Esophagus muscularis mucosa (tissue), 4 donors: ENCODE measurements at regions of chr10 and their contacts with region 1.

Region 1: DNA sequence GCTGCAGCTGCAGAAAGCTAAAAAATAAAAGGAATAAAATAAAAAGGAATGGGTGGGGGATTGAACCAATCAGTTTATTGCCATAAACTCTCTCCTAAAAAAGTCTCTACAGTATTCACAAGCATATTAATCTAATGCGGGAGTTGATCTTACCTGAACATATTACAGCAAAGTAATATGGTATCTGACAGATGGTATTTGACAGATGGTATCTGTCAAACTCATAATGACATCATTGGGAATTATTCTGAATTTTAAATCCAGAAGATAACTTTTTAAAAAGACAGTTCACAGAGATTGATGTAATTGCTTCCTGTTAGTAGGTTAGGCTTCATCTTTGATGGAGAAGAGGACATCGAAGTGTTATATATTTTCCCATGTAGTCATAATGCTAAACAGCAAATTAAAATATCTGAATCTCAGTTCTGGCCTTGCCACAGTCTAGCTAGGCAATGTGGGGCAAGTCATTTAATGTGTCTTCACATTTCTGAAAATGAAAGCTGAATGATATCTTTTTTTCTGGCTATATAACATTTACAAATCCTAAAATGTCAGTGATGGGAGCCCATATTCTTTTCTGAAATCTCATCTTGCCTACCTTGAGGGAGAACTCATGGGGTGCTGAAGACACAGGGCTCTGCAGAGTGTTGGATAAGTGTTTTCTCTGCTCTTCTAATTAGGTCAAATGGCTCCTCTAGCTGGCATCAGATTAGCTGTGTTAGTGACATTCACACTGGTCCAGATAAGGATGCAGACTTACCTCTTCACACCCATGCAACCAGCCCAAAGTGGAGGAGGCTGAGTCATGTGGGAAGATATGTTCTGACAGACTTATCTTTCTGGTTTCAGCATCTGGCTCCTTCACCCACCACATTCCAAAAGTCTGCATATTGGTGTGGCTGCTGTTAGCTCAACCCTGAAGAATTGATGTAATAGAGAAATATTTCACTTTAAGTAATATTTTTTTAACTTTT is 2.1 kb upstream of the LIPM start:
- DNase-seq: no peak
- H3K4me3 ChIP-seq: no peak overlapping the region
- H3K27ac ChIP-seq: no peak overlapping the region
- H3K4me1 ChIP-seq: no peaks in the 10 kb centered on the region
- H3K27me3 ChIP-seq: no peaks in the 10 kb centered on the region
- CTCF ChIP-seq: no peak
- EP300 ChIP-seq: no peak
- POLR2A ChIP-seq: no peak

Region 2: GRCh38 chr10:88582806-88583583 is 217.4 kb before region 1 on chr10 and contains the start of gene RNLS:
- intact Hi-C with region 1: loop called (anchors 10 kb)
- DNase-seq: peak; percentile 93
- H3K4me3 ChIP-seq: peak within 1 kb of the TSS; percentile 63 to 74 (median 72)
- H3K27ac ChIP-seq: peak within 1 kb of the TSS; percentile 89 to 95 (median 92)
- H3K4me1 ChIP-seq: peaks cover 0 to 13% (median 9%) of the 10 kb centered on the region in 4 donors
- H3K27me3 ChIP-seq: no peaks in the 10 kb centered on the region
- CTCF ChIP-seq: peak; percentile 68 to 87 (median 78)
- EP300 ChIP-seq: no peak
- POLR2A ChIP-seq: no peak
- total RNA-seq, gene RNLS: 6.7 to 12.9 (median 10.9) TPM